Prostate gland (tissue), 2 donors: ENCODE measurements at regions of chr6 and their contacts with region 1.

Region 1: GRCh38 chr6:26196846-26197648 is 109.8 kb downstream of the HFE start:
- DNase-seq: peak; percentile 91
- H3K4me3 ChIP-seq: peak overlapping the region; percentile 56 to 68
- H3K27ac ChIP-seq: peak overlapping the region; percentile 87 to 91
- H3K4me1 ChIP-seq: peaks cover 3% of the 10 kb centered on the region
- H3K27me3 ChIP-seq: no peaks in the 10 kb centered on the region
- CTCF ChIP-seq: peak in 1 of 4 experiments; percentile 5
- POLR2A ChIP-seq: peak; percentile 77

Region 2: GRCh38 chr6:26025894-26026832 is 170.9 kb before region 1 on chr6:
- intact Hi-C with region 1: loop called (anchors 5 kb)
- DNase-seq: peak; percentile 94
- H3K4me3 ChIP-seq: peak overlapping the region; percentile 55 to 67
- H3K27ac ChIP-seq: peak overlapping the region; percentile 88 to 91
- H3K4me1 ChIP-seq: no peaks in the 10 kb centered on the region
- H3K27me3 ChIP-seq: no peaks in the 10 kb centered on the region
- CTCF ChIP-seq: peak; percentile 82 to 97 (median 90)
- POLR2A ChIP-seq: peak; percentile 34

Region 3: DNA sequence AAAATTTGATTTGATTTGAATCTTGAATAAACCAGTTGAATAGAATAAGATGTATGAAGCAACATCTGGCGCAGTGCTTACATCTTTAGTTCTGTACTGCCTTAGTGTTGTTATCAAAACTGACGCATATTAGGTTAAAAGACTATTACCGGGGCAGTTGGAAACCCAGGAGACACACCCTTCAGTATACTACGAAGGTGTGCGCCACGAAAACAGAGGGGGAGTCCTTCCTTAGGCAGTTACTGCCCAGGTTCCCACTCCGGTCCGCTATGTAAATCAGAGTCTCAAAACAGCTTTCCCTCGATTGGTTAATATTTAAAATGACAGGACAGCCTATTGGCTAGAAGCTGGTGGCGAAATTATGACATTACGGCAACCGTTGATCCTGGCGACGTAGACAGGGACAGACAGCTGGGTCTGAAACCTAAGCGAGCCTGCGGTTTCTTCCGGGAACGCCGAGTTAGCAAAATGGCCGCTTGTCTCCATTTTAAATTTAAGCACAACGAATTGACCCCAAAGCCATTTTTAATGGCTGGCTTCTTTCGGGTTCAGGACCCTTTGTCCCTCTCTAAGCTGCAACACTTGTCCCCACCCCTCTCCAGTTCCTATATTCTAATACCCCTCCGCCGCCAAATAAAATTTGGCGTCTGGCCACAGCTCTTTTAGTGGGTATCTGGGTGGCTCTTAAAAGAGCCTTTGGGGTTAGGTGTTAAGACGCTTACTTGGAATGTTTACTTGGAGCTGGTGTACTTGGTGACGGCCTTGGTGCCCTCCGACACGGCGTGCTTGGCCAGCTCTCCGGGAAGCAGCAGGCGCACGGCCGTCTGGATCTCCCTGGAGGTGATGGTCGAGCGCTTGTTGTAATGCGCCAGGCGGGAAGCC is 74.0 kb before region 1 on chr6:
- intact Hi-C with region 1: loop called (anchors 2 kb)
- DNase-seq: peak; percentile 98
- H3K4me3 ChIP-seq: peak overlapping the region; percentile 81 to 85
- H3K27ac ChIP-seq: peak overlapping the region; percentile 91 to 95
- H3K4me1 ChIP-seq: peaks cover 2% of the 10 kb centered on the region
- H3K27me3 ChIP-seq: no peaks in the 10 kb centered on the region
- CTCF ChIP-seq: peak in 1 of 4 experiments; percentile 11
- POLR2A ChIP-seq: peak; percentile 36